ENCODE measurements at regions of chr7 and their contacts with region 1.

Region 1: DNA sequence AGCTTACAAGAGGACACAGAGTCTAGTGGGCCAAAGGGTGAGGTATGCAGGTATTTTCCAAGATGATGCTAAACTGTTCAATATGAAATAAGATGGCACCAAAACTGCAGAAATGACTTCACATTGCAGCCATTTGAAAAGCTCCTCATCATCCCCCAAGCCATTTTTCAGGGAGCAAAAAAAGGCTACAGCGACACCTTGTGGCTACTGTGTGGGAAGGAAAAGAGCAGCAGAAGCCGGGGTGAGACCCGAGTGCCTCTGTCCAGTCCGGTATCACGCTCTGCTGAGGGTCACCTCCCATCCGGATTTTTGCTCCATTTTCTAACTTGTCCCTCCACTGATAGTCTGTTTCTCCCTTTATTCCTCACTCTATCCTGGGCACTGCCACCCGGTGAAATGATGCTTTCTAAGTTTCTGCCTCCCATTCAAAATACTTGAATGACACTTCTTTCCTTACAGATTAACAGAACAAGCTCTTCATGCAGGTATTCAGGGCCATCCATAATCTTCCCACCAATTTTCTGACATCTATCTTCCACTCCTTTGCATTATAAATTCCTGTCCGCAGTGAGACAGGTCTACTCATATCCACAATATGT is 220.2 kb downstream of the DGKI start:
- DNase-seq: peak; percentile 84
- H3K4me3 Mint-ChIP-seq: no peak overlapping the region
- H3K27ac Mint-ChIP-seq: no peak overlapping the region
- H3K4me1 Mint-ChIP-seq: peaks cover 2% of the 10 kb centered on the region
- H3K27me3 Mint-ChIP-seq: peaks cover 8% of the 10 kb centered on the region

Region 2: GRCh38 chr7:137606061-137606674 is 20.4 kb before region 1 on chr7:
- intact Hi-C with region 1: loop called (anchors 1 kb)
- DNase-seq: no peak
- H3K4me3 Mint-ChIP-seq: no peak overlapping the region
- H3K27ac Mint-ChIP-seq: no peak overlapping the region
- H3K4me1 Mint-ChIP-seq: no peaks in the 10 kb centered on the region
- H3K27me3 Mint-ChIP-seq: no peaks in the 10 kb centered on the region

Region 3: GRCh38 chr7:137656227-137656849 is 29.8 kb after region 1 on chr7:
- intact Hi-C with region 1: no loop called
- DNase-seq: peak; percentile 89
- H3K4me3 Mint-ChIP-seq: no peak overlapping the region
- H3K27ac Mint-ChIP-seq: no peak overlapping the region
- H3K4me1 Mint-ChIP-seq: no peaks in the 10 kb centered on the region
- H3K27me3 Mint-ChIP-seq: peaks cover 4% of the 10 kb centered on the region

Measured in activated CD4-positive, alpha-beta T cell treated with anti-CD3 and anti-CD28 coated beads, Interleukin-2, amount 10 ng/mL, durations not matched to agents 24 days and 14 days (primary cell).